GM10248 (cell line): ENCODE measurements at regions of chr12 and their contacts with region 1.

Region 1: DNA sequence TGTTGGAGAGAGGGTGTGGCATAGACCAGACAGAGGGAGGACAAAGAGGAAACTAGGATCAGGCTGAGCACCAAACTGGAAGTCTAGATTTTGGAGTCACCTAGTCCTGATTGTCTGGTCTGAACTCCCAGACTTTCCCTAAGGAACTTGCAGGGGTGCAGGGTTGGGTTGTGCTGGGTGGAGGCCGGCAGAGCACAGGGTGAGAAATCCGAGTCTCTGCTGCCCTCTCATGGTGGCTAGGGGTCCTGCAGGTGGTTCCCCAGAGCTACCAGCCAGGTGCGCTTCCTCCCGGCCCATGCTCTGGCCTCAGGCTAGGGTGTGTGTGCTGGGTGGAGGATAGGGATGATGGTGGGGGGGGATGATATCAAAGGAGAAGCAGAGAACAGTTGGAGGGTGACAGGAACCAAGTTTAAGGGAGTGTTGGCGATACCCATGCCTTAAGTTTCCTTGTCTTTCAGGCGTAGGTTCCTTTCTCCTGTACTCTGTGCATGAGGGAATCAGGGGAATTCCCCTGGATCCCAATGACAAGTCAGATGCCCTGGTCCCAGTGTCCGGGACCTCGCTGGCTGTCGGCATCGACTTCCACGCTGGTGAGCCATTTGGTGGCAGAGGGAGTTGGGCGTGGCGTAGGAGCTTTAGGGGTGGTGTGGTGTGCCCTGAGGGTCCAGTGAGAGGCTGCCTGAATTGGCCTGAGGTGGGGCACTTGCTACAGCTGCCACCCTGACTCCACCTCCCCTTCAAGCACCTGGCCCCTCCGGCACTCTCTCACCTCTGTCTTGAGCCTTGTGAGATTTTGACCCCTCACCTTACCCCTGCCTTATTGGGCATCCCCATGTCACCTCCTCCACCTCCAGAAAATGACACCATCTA is 33.4 kb upstream of the NXPH4 start:
- DNase-seq: peak; percentile 95
- CTCF ChIP-seq: peak; percentile 90

Region 2: GRCh38 chr12:57069523-57069922 is 113.6 kb before region 1 on chr12:
- CTCF ChIA-PET with region 1: interaction called, 29 read pairs
- POLR2A ChIA-PET with region 1: no interaction called
- DNase-seq: peak; percentile 65
- CTCF ChIP-seq: peak; percentile 75

Region 3: DNA sequence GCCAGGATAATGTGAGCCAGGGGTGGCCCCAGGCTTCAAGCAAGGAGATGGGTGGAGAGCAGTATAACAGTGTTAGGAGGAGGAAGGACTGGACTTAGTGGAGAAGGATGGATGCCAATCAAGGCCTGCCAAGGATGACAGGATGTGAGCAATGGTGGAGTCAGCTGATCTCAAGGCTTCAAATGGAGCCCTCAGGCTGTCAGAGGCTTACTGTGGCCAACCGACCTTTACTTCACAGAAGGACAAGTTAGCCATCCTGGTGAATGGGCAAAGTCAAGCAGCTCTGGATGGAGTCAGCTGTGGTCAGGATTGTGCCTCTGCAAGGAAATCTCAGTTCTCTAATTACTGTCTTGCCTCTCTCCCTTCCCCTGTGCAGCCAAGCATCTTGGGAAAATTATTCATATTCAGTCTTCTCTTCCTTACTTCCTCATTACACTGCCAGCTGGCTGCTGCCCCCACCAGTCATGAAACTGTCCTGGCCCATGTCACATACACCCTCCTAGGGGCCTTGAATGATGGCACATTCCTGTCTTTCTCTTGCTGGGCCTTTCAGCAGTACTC is 64.4 kb before region 1 on chr12:
- CTCF ChIA-PET with region 1: interaction called, 159 read pairs
- POLR2A ChIA-PET with region 1: no interaction called
- DNase-seq: no peak
- CTCF ChIP-seq: no peak

Region 4: DNA sequence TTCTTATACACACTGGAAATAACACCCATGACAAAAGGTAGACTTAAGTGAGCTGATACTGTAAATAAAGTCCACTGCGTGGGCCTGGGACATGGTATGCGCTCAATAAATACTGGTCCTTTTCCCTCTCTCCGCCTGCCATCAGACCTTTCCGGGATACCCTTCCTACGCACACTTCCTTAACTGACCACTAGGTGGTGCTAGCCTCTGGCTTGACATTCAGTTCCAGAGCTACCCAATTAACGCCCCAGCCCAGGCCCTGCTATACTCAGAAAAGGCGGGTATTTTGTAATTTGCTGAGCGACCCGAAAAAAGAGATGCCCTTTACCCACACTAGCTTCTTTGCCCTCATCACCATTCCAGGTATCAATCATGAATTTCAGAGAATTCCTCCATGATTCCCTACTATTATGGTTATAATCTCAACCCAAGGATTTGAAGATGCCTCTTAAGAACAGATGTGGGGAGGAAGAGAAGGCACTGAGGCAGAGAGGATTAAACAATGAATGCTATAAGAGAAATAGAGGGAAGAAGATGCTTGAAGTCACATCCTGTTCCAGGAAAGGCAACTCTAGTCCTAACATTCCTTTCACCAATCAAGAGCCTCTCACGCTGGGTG is 58.8 kb before region 1 on chr12:
- CTCF ChIA-PET with region 1: interaction called, 159 read pairs
- POLR2A ChIA-PET with region 1: no interaction called
- DNase-seq: peak; percentile 70
- CTCF ChIP-seq: peak; percentile 74

Region 5: GRCh38 chr12:57195611-57196371 is 12.6 kb after region 1 on chr12:
- CTCF ChIA-PET with region 1: interaction called, 10 read pairs
- POLR2A ChIA-PET with region 1: no interaction called
- DNase-seq: no peak
- CTCF ChIP-seq: no peak

Region 6: GRCh38 chr12:57213058-57213715 is 30.0 kb after region 1 on chr12:
- CTCF ChIA-PET with region 1: interaction called, 15 read pairs
- POLR2A ChIA-PET with region 1: no interaction called
- DNase-seq: peak; percentile 89
- CTCF ChIP-seq: peak; percentile 97